ENCODE measurements at regions of chr3 and their contacts with region 1.

Region 1: DNA sequence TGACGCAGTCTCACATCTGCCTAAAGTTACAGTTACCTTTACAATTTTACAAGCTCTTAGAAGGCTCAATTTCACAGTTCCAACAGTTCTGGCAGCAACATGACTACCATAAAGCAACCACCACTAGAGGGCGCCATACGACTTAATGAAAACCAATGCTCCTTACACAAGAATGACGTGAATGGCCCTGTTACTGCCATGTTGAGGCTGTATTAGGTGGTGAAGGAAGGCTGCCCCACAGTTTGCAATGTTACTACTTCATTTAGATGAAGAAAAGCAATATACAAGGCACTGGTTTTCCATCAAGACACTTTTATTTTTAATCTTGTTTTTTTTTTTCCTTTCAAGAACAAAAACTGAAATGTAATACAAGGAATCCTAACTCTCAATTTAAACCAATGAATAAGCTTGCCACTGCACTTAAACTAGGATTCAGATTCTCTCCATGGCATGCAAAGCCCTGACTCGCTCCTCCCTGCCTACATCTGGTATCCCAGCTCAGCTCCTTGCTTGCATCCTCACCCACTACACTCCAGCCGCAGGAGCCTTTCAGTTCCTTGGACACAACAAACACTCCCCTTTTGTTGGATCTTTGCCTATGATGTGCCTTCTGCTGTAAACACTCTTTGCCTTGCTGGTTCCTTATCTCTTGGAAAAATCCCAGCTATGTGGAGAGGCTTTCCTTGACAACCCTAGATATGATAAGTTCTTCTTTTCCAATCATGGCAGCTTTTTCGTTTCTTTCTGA is 270.7 kb downstream of the GBE1 start:
- DNase-seq: peak; percentile 84
- H3K4me3 ChIP-seq: no peak overlapping the region
- H3K27ac ChIP-seq: no peak overlapping the region
- H3K4me1 ChIP-seq: peaks cover 3% of the 10 kb centered on the region
- CTCF ChIP-seq: peak; percentile 92

Region 2: GRCh38 chr3:81760924-81761903 is 270.5 kb after region 1 on chr3 and contains the start of gene GBE1:
- CTCF ChIA-PET with region 1: no interaction called
- POLR2A ChIA-PET with region 1: no interaction called
- intact Hi-C with region 1: loop called (anchors 10 kb)
- DNase-seq: peak; percentile 92
- H3K4me3 ChIP-seq: peak within 1 kb of the TSS; percentile 70
- H3K27ac ChIP-seq: peak within 1 kb of the TSS; percentile 81
- H3K4me1 ChIP-seq: peaks cover 23% of the 10 kb centered on the region
- CTCF ChIP-seq: peak; percentile 59; the same call in 1 of the 2 replicates
- total RNA-seq, gene GBE1: 10.7 and 12.5 TPM in 2 replicates

Region 3: GRCh38 chr3:82133070-82133606 is 642.4 kb after region 1 on chr3:
- CTCF ChIA-PET with region 1: no interaction called
- POLR2A ChIA-PET with region 1: interaction called, 3 read pairs
- intact Hi-C with region 1: loop called (anchors 2 kb)
- DNase-seq: peak; percentile 47
- H3K4me3 ChIP-seq: no peak overlapping the region
- H3K27ac ChIP-seq: no peak overlapping the region
- H3K4me1 ChIP-seq: no peaks in the 10 kb centered on the region
- CTCF ChIP-seq: peak; percentile 91